Activated CD4-positive, alpha-beta memory T cell treated with anti-CD3 and anti-CD28 coated beads for 36 hours (primary cell): ENCODE measurements at regions of chr17 and their contacts with region 1.

Region 1: GRCh38 chr17:43661699-43662412 is at the start of gene MEOX1:
- DNase-seq: peak; percentile 66
- H3K4me3 Mint-ChIP-seq: peak within 1 kb of the TSS; percentile 64
- H3K27ac Mint-ChIP-seq: peak within 1 kb of the TSS; percentile 47
- H3K4me1 Mint-ChIP-seq: peaks cover 44% of the 10 kb centered on the region
- H3K27me3 Mint-ChIP-seq: peaks cover 3% of the 10 kb centered on the region
- total RNA-seq, gene MEOX1: 0.34 to 0.67 TPM

Region 2: DNA sequence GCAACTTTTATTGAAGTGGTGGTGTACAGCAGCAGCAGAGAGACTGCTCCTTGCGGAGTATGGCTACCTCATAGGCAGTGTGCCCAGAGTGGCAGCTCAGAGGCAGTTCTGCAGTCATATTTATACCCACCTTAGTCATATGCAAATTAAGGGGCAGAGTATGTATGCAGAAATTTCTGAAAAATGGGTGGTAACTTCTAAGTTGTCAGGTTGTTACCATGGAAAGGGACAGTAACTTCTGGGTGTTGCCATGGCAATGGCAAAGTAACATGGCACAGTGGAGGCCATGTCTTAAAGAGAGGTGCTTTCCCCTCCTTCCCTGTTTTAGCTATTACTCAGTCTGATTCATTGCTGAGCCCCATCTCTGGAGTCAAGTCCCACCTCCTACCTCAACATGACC is 53.5 kb before region 1 on chr17:
- CTCF ChIA-PET with region 1: no interaction called
- POLR2A ChIA-PET with region 1: no interaction called
- intact Hi-C with region 1: loop called (anchors 1 kb)
- DNase-seq: peak; percentile 81
- H3K4me3 Mint-ChIP-seq: no peak overlapping the region
- H3K27ac Mint-ChIP-seq: peak overlapping the region; percentile 45
- H3K4me1 Mint-ChIP-seq: peaks cover 5% of the 10 kb centered on the region
- H3K27me3 Mint-ChIP-seq: no peaks in the 10 kb centered on the region

Region 3: DNA sequence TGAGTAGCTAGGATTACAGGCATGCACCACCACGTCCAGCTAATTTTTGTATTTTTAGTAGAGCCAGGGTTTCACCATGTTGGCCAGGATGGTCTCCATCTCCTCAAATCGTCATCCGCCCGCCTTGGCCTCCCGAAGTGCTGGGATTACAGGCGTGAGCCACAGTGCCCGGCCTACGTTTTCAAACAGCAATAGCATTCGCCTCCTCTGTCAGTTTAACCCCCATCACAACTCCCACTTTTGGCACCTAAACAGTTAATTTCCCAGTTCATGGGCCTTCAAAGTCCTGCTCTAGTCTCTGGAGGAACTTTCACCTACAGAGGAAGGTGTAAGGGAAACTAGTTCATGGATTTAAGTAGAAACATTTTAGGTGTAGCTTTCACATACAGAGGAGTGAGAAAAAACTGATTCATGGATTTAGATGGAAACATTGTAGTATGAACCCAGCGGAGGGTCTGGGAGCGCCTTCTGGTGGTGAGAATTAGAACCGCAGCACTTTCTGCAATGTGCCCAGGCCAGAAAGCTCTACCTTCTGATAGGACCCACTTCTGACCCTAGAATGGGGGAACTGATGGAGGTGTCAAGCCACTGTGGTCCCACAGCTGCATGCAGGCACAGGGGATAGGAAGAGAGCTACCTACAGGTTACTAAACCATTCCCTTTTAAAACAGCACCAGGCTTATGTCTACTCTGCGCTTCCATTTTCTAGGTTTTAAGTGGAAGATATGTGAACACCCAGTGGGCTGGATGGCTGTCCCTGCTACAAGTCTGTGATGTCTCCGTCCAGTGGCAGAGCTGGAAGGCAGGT is 11.9 kb after region 1 on chr17:
- CTCF ChIA-PET with region 1: interaction called, 13 read pairs
- POLR2A ChIA-PET with region 1: no interaction called
- intact Hi-C with region 1: no loop called
- DNase-seq: peak; percentile 85
- H3K4me3 Mint-ChIP-seq: no peak overlapping the region
- H3K27ac Mint-ChIP-seq: no peak overlapping the region
- H3K4me1 Mint-ChIP-seq: peaks cover 12% of the 10 kb centered on the region
- H3K27me3 Mint-ChIP-seq: no peaks in the 10 kb centered on the region

Region 4: DNA sequence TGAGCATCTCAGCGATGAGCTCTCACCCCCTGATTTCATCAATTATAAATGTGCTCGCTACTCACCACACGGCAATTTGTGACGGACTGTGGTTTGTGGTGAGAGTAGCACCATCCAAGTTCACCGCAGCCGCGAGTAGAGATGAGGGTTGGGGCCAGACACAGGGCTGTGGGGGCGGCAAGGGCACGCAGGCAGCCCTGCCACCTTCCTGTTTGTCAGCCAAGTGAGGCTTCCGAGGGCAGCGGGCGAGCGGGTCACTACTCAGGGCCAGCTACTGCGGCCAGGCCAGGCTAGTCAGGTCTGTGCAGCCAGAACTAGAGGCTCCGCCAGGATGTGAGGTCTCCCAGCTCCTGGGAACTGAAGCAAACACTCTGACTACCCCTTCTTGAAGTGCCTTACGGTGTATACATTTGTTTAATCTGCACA is 39.5 kb after region 1 on chr17:
- CTCF ChIA-PET with region 1: no interaction called
- POLR2A ChIA-PET with region 1: no interaction called
- intact Hi-C with region 1: no loop called
- DNase-seq: peak; percentile 80
- H3K4me3 Mint-ChIP-seq: peak overlapping the region; percentile 40
- H3K27ac Mint-ChIP-seq: peak overlapping the region; percentile 39
- H3K4me1 Mint-ChIP-seq: peaks cover 11% of the 10 kb centered on the region
- H3K27me3 Mint-ChIP-seq: peaks cover 8% of the 10 kb centered on the region